Prostate gland (tissue), 2 donors: ENCODE measurements at regions of chr3 and their contacts with region 1.

Region 1: GRCh38 chr3:48847504-48848423 is at the start of gene PRKAR2A:
- DNase-seq: peak; percentile 88
- H3K4me3 ChIP-seq: peak within 1 kb of the TSS; percentile 91 to 92
- H3K27ac ChIP-seq: peak within 1 kb of the TSS; percentile 97
- H3K4me1 ChIP-seq: peaks cover 11% of the 10 kb centered on the region
- H3K27me3 ChIP-seq: no peaks in the 10 kb centered on the region
- CTCF ChIP-seq: peak in 1 of 4 experiments; percentile 7
- POLR2A ChIP-seq: peak; percentile 82
- total RNA-seq, gene PRKAR2A: 33.7 to 35.3 TPM

Region 2: GRCh38 chr3:48747015-48747615 is 100.6 kb before region 1 on chr3:
- intact Hi-C with region 1: loop called (anchors 5 kb)
- DNase-seq: no peak
- H3K4me3 ChIP-seq: no peak overlapping the region
- H3K27ac ChIP-seq: peak overlapping the region; percentile 72 to 76
- H3K4me1 ChIP-seq: peaks cover 11% of the 10 kb centered on the region
- H3K27me3 ChIP-seq: no peaks in the 10 kb centered on the region
- CTCF ChIP-seq: no peak
- POLR2A ChIP-seq: no peak